Tibial artery (tissue), 4 donors: ENCODE measurements at regions of chr2 and their contacts with region 1.

Region 1: DNA sequence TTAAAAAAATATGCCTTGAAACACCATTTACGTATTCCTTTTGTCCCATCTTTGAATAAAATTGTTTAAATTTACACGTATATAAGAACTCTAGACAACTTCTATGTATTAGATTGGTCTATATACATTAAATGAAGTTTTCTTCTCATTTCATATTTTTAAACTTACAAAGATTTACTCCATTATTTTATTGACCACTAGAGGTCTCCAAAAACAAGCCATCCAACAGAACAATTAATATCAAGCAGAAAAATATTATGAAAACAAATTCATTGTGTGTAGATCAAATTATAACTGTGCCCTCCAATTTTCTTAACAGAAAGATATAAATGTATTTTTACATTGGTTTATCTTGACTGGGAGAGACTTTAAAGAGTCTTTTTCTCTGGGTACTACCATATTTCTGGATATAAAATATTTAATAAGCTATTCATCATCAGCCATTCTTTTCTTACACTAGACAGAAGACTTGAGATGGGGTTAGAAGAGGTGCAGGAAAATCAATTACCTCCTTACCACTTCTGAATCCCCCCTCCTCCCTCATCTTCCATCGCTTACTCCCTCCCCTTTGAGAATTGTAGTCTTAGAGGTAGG is 66.5 kb downstream of the DPP4 start:
- DNase-seq: no peak
- H3K4me3 ChIP-seq: no peak overlapping the region
- H3K27ac ChIP-seq: no peak overlapping the region
- H3K4me1 ChIP-seq: no peaks in the 10 kb centered on the region
- H3K27me3 ChIP-seq: peaks cover 0 to 2% of the 10 kb centered on the region in 2 donors
- CTCF ChIP-seq: peak; percentile 37 to 55

Region 2: GRCh38 chr2:161436411-161436810 is 571.1 kb before region 1 on chr2:
- intact Hi-C with region 1: no loop called
- DNase-seq: no peak
- H3K4me3 ChIP-seq: no peak overlapping the region
- H3K27ac ChIP-seq: no peak overlapping the region
- H3K4me1 ChIP-seq: no peaks in the 10 kb centered on the region
- H3K27me3 ChIP-seq: peaks cover 0 to 25% of the 10 kb centered on the region in 2 donors
- CTCF ChIP-seq: no peak

Region 3: DNA sequence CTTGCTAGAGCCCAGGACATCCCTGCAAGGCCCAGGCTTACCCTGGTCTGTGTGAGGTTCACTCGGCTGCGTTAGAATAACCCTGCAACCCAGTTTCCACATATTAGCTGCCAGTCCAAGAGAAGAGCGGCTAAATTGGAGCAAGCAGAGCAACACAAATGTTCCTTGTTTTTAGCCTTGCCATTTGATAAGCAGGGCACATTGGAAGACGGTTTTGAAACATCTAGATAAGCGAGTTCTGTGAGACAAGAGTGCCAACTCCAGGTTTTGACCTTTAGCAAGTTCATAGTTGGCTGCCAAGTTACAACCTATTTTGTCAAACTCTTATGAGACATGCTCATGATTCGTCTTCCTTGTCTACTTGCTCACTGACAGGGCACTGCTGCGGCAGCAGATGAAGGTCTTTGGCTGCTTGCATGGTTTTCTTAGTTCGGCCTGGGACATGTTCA is 43.0 kb after region 1 on chr2:
- intact Hi-C with region 1: no loop called
- DNase-seq: no peak
- H3K4me3 ChIP-seq: no peak overlapping the region
- H3K27ac ChIP-seq: no peak overlapping the region
- H3K4me1 ChIP-seq: no peaks in the 10 kb centered on the region
- H3K27me3 ChIP-seq: peaks cover 0 to under 1% of the 10 kb centered on the region in 2 donors
- CTCF ChIP-seq: no peak

Region 4: DNA sequence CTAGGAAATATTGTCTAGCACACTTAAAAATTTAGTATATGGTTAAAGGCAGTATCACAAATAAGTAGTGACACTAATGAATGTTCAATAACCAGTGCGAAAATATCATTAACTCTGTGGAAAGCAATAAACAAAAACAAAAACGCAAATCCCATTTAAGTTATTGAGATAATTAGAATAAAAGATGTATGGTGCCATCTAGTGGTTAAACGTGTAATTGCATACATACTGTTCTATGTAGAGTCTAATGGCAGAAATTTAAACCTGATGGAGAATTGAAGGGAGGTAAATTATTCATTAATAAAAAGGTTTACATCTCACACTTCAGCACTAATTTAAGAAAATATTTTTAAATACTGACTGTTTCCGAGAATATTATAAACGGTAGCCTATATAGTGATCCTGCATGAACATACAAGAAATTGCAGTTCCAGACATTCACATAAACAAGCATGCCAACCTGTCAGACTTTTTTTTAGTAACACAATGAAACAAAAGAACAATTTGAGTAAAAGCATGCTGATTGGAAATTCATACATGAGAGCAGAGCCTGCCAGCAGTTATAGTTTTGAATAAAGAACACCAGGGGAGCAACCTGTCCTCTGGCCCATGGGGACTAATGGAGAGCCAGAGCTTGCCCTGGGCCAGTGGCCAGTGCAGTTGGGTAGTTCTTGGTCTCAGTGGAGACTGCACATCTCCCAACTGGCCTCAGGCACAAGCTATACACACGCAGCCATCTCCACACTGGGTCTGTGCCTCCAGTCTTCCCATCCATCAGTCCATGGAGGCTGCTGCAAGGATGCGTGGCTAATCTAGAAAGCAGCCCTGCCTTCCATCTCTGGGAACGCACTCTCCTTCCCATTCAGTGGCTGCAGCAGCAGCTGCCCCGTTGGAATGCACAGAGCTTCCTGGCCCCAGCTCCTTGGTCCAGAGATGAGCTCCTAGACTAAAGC is 116.5 kb after region 1 on chr2:
- intact Hi-C with region 1: loop called (anchors 10 kb)
- DNase-seq: no peak
- H3K4me3 ChIP-seq: no peak overlapping the region
- H3K27ac ChIP-seq: no peak overlapping the region
- H3K4me1 ChIP-seq: no peaks in the 10 kb centered on the region
- H3K27me3 ChIP-seq: no peaks in the 10 kb centered on the region
- CTCF ChIP-seq: peak; percentile 60 to 78

Region 5: GRCh38 chr2:162301151-162301804 is 293.7 kb after region 1 on chr2:
- intact Hi-C with region 1: no loop called
- DNase-seq: peak in 1 of 2 donors; percentile 27
- H3K4me3 ChIP-seq: no peak overlapping the region
- H3K27ac ChIP-seq: no peak overlapping the region
- H3K4me1 ChIP-seq: no peaks in the 10 kb centered on the region
- H3K27me3 ChIP-seq: no peaks in the 10 kb centered on the region
- CTCF ChIP-seq: peak; percentile 79 to 87